ENCODE measurements at regions of chr14 and their contacts with region 1.

Region 1: GRCh38 chr14:37807722-37808121 is 212.3 kb downstream of the TTC6 start:
- DNase-seq: no peak
- ATAC-seq: no peak
- H3K4me3 Mint-ChIP-seq: no peak overlapping the region
- H3K27ac Mint-ChIP-seq: no peak overlapping the region
- H3K4me1 Mint-ChIP-seq: no peaks in the 10 kb centered on the region
- H3K27me3 Mint-ChIP-seq: no peaks in the 10 kb centered on the region

Region 2: GRCh38 chr14:36085861-36086260 is 1721.9 kb before region 1 on chr14:
- CTCF ChIA-PET with region 1: no interaction called
- POLR2A ChIA-PET with region 1: no interaction called
- intact Hi-C with region 1: loop called in 1 of 2 experiments (anchors 10 kb)
- DNase-seq: no peak
- ATAC-seq: no peak
- H3K4me3 Mint-ChIP-seq: no peak overlapping the region
- H3K27ac Mint-ChIP-seq: no peak overlapping the region
- H3K4me1 Mint-ChIP-seq: no peaks in the 10 kb centered on the region
- H3K27me3 Mint-ChIP-seq: peaks cover 8% of the 10 kb centered on the region

Region 3: DNA sequence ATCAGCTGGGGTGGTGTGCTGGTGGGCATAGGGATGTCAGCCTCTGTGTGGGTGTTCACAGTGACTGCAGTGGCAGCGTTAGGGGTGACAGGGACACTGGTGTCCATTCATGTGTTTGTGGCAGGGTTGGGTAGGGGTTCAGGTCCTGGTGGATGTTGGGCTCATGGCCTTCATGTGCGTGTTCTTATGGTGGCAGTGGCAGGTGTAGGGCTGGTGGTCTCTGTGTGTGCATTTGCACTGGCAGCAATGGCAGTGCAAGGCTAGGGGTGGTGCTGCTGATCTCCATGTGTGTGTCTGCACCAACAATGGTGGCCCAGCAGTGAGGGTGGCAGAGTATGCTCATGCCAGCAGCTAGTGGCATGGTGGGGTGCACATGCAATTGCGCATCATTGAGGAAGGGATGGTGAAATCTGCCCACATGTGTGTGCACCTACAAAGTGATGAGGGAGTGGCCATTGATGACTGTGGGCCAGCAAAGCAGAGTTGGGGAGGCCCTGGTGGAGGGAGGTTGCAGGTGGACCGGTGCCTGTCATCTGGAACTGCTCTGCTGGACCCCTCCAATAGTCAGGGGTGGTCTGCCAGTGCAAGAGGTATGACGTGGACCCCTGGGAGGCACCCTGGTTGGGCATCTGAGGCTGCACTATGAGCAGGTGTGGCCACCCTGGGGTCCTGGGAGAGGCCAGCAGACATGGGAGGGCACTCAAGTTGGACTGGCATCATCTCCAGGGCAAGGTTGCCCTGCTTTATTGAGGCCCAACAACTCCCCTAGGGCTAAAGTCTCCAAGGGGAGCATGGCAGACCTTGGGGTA is 29.4 kb before region 1 on chr14:
- CTCF ChIA-PET with region 1: no interaction called
- POLR2A ChIA-PET with region 1: no interaction called
- intact Hi-C with region 1: no loop called
- DNase-seq: no peak
- ATAC-seq: no peak
- H3K4me3 Mint-ChIP-seq: no peak overlapping the region
- H3K27ac Mint-ChIP-seq: no peak overlapping the region
- H3K4me1 Mint-ChIP-seq: no peaks in the 10 kb centered on the region
- H3K27me3 Mint-ChIP-seq: no peaks in the 10 kb centered on the region

Region 4: DNA sequence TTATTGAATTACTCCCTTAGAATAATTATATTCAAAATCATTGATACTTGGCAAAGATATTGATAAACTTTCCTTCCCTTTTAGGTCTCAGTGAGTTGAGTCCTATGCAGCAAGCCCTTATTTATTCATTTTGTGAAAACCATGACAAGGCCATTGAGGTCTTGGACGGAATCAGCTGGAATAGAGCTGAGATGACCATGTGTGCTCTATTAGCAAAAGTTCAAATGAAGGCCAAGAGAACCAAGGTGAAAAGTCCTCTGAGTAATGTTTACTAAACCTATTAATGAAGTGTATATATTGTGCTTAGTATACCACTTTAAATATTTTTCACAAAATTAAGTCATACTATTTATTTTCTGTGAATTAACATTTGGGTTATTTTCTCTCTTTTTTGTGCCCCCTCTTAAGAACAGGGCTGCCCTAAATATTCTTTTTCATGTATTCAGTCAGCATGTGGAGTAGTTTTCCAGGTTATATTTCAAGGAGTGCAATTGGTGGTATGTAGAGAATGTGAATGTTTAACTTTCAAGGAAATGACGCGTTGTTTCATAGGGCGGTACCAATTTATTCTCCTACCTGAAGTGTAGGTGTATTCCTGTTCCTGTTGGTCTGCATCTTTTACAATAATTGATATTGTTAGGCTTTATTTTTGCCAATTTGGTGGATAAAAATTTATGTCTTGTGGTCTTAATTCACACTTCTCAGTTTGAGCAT is 10.9 kb before region 1 on chr14:
- CTCF ChIA-PET with region 1: no interaction called
- POLR2A ChIA-PET with region 1: no interaction called
- intact Hi-C with region 1: no loop called
- DNase-seq: no peak
- ATAC-seq: no peak
- H3K4me3 Mint-ChIP-seq: no peak overlapping the region
- H3K27ac Mint-ChIP-seq: no peak overlapping the region
- H3K4me1 Mint-ChIP-seq: no peaks in the 10 kb centered on the region
- H3K27me3 Mint-ChIP-seq: no peaks in the 10 kb centered on the region

Region 5: GRCh38 chr14:37864861-37865718 is 57.4 kb after region 1 on chr14:
- CTCF ChIA-PET with region 1: no interaction called
- POLR2A ChIA-PET with region 1: no interaction called
- intact Hi-C with region 1: no loop called
- DNase-seq: no peak
- ATAC-seq: no peak
- H3K4me3 Mint-ChIP-seq: no peak overlapping the region
- H3K27ac Mint-ChIP-seq: no peak overlapping the region
- H3K4me1 Mint-ChIP-seq: no peaks in the 10 kb centered on the region
- H3K27me3 Mint-ChIP-seq: peaks cover 3% of the 10 kb centered on the region